PC-9 (cell line): ENCODE measurements at regions of chr6 and their contacts with region 1.

Region 1: DNA sequence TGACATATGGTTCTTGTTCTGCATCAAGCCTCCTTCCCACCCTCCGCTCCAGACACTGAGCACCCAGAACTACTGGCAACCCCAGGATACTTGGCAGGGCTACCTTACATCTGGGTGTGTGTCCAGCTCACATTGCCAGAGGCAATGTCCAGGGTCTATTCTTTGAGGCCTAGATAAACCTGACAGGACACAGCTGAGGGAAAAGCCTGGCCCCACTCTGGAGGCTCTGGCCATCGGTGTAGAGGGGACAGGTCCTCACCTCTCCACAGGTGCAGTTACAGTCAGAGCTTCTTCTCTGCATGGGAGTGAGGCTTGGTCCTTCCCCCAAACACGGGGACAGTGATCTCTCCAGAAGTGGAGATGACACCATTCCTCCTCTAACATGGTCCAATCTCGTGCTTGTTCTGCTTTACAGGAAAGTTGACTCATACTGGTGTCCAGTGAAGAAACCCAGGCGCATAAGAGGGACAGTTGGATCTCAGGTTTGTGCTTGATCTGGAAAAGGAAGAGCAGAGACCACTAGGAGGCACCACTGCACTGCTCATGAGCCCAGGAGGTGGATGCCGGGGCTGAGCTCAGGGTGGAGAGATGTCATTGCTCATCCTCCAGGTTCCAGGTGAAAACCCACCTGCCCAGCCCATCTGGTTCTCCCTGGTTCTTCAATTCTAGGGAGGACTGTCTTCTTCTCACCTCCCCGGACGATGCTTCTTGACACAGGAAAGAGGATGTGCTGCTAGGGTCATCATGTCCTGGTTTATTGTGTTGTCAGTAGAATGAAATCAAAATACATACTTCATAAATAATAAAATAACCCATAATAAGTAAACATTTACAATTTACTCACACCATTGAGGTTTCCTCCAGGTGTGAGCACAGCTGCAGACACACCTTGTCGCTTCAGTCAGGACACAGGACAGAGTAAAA is 14.7 kb downstream of the HLA-F start:
- DNase-seq: peak; percentile 61 to 66
- H3K4me3 ChIP-seq: no peak overlapping the region
- H3K27ac ChIP-seq: no peak overlapping the region
- H3K4me1 ChIP-seq: no peaks in the 10 kb centered on the region
- H3K27me3 ChIP-seq: no peaks in the 10 kb centered on the region
- CTCF ChIP-seq: peak; percentile 90

Region 2: GRCh38 chr6:29824144-29824543 is 86.2 kb after region 1 on chr6:
- CTCF ChIA-PET with region 1: no interaction called
- POLR2A ChIA-PET with region 1: no interaction called
- intact Hi-C with region 1: no loop called
- DNase-seq: no peak
- H3K4me3 ChIP-seq: no peak overlapping the region
- H3K27ac ChIP-seq: no peak overlapping the region
- H3K4me1 ChIP-seq: no peaks in the 10 kb centered on the region
- H3K27me3 ChIP-seq: peaks cover 11% of the 10 kb centered on the region; the same call in 1 of the 2 replicates
- CTCF ChIP-seq: no peak

Region 3: GRCh38 chr6:29834564-29835436 is 96.8 kb after region 1 on chr6:
- CTCF ChIA-PET with region 1: interaction called, 7 read pairs
- POLR2A ChIA-PET with region 1: interaction called, 4 read pairs
- intact Hi-C with region 1: loop called (anchors 1 kb)
- DNase-seq: peak in 1 of 2 experiments; percentile 56
- H3K4me3 ChIP-seq: no peak overlapping the region
- H3K27ac ChIP-seq: no peak overlapping the region
- H3K4me1 ChIP-seq: no peaks in the 10 kb centered on the region
- H3K27me3 ChIP-seq: peaks cover 5% of the 10 kb centered on the region; the same call in 1 of the 2 replicates
- CTCF ChIP-seq: peak; percentile 93